HepG2 (cell line): ENCODE measurements at regions of chr14 and their contacts with region 1.

Region 1: DNA sequence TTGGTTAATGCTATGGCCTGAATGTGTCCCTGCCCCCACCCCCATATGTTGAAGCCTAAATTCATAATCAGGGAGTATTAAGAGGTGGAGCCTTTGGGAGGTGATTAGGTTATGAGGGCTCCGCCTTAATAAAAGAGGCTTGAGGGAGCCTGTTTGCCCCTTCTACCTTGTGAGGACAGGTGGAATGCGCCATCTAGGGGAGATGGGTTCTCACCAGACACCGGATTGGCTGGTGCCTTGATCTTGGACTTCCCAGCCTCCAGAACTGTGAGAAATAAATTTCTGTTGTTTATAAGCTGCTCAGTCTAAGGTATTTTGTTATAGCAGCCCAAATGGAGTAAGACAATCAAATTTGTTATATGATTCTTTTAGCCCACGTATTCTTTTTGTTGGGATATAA is 148.3 kb downstream of the PTCSC3 start:
- DNase-seq: no peak
- ATAC-seq: peak; percentile 62; the same call in 2 of the 3 replicates
- H3K4me3 ChIP-seq: no peak overlapping the region
- H3K27ac ChIP-seq: no peak overlapping the region
- H3K4me1 ChIP-seq: no peaks in the 10 kb centered on the region
- H3K27me3 ChIP-seq: no peaks in the 10 kb centered on the region
- CTCF ChIP-seq: peak; percentile 63
- EP300 ChIP-seq: no peak
- POLR2A ChIP-seq: no peak
- RAD21 ChIP-seq: no peak

Region 2: GRCh38 chr14:35261774-35262173 is 766.4 kb before region 1 on chr14:
- CTCF ChIA-PET with region 1: no interaction called
- POLR2A ChIA-PET with region 1: no interaction called
- in situ Hi-C with region 1: no loop called
- intact Hi-C with region 1: no loop called
- DNase-seq: no peak
- ATAC-seq: peak; percentile 37; the same call in 1 of the 3 replicates
- H3K4me3 ChIP-seq: no peak overlapping the region
- H3K27ac ChIP-seq: no peak overlapping the region
- H3K4me1 ChIP-seq: no peaks in the 10 kb centered on the region
- H3K27me3 ChIP-seq: no peaks in the 10 kb centered on the region
- CTCF ChIP-seq: peak; percentile 45
- EP300 ChIP-seq: no peak
- POLR2A ChIP-seq: no peak
- RAD21 ChIP-seq: no peak

Region 3: GRCh38 chr14:35883677-35884293 is 144.4 kb before region 1 on chr14:
- CTCF ChIA-PET with region 1: interaction called, 7 read pairs
- POLR2A ChIA-PET with region 1: no interaction called
- in situ Hi-C with region 1: no loop called
- intact Hi-C with region 1: loop called (anchors 1 kb)
- DNase-seq: peak; percentile 50
- ATAC-seq: peak; percentile 83
- H3K4me3 ChIP-seq: no peak overlapping the region
- H3K27ac ChIP-seq: no peak overlapping the region
- H3K4me1 ChIP-seq: peaks cover 5% of the 10 kb centered on the region; the same call in 1 of the 2 replicates
- H3K27me3 ChIP-seq: no peaks in the 10 kb centered on the region; a peak in 1 of 5 replicates
- CTCF ChIP-seq: peak; percentile 82
- EP300 ChIP-seq: 0 out of 4 replicates have a peak, but pooled peaks of 1 of the 2 experiments have one; percentile 4
- POLR2A ChIP-seq: no peak
- RAD21 ChIP-seq: peak; percentile 21; the same call in 1 of the 2 replicates